ENCODE measurements at regions of chr22 and their contacts with region 1.

Region 1: GRCh38 chr22:39236321-39237317 is 8.2 kb downstream of the PDGFB start:
- DNase-seq: peak; percentile 89 to 95
- ATAC-seq: peak; percentile 57 to 67
- H3K4me3 ChIP-seq: peak overlapping the region in 2 of 4 donors; percentile 0 to 3
- H3K27ac ChIP-seq: peak overlapping the region; percentile 91 to 97 (median 92)
- H3K4me1 ChIP-seq: peaks cover 77 to 90% of the 10 kb centered on the region in 2 donors
- H3K27me3 ChIP-seq: no peaks in the 10 kb centered on the region
- CTCF ChIP-seq: no peak
- POLR2A ChIP-seq: no peak

Region 2: GRCh38 chr22:38755911-38756532 is 480.6 kb before region 1 on chr22 and contains the start of gene SUN2:
- in situ Hi-C with region 1: no loop called
- intact Hi-C with region 1: loop called (anchors 10 kb)
- DNase-seq: peak; percentile 89 to 94
- ATAC-seq: peak; percentile 76 to 81
- H3K4me3 ChIP-seq: peak within 1 kb of the TSS; percentile 55 to 93 (median 74)
- H3K27ac ChIP-seq: peak within 1 kb of the TSS; percentile 93 to 100 (median 96)
- H3K4me1 ChIP-seq: peaks cover 34 to 38% of the 10 kb centered on the region in 2 donors
- H3K27me3 ChIP-seq: no peaks in the 10 kb centered on the region
- CTCF ChIP-seq: no peak
- POLR2A ChIP-seq: peak; percentile 89 to 94
- total RNA-seq, gene SUN2: 177 to 423 (median 312) TPM

Region 3: DNA sequence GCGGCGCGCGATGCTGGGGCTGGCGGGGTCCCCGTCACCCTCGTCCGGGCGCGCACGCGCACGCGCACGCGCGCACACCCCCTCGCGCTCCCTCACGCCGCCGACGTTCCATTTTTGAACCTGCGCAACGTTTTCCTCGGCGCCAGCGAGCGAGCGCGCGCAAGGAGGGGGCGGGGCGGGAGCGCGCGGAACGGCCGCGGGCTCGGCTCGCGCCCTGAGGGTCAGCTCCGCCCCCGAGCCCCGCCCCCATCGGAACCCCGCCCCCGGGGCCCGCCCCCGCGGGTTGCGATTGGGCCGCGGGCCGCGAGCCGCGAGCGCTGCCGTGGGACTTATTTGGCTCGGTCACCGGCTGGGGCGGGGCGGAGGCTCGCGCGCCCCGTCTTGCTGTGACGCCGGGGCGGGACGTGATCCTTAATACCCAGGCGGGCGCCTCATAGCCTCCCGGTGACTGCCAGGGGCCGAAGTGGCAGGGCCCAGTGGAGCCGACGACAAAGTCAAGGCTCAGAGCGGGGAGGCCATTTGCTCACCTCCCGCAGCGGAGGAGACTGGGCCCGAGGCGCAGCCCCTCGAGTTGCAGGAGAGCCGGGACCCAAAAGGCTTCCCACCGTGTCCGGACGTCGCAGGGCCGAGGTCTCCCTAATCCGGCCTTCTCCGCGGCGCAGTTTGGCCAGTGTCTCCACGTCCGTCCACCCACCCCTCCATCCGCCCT is 84.0 kb before region 1 on chr22 and contains the start of gene CBX7:
- in situ Hi-C with region 1: no loop called
- intact Hi-C with region 1: loop called (anchors 5 kb)
- DNase-seq: peak; percentile 90 to 95
- ATAC-seq: peak; percentile 79 to 87
- H3K4me3 ChIP-seq: peak within 1 kb of the TSS; percentile 85 to 98 (median 97)
- H3K27ac ChIP-seq: peak within 1 kb of the TSS; percentile 94 to 99 (median 98)
- H3K4me1 ChIP-seq: peaks cover 29 to 31% of the 10 kb centered on the region in 2 donors
- H3K27me3 ChIP-seq: no peaks in the 10 kb centered on the region
- CTCF ChIP-seq: no peak
- POLR2A ChIP-seq: peak; percentile 87 to 96
- total RNA-seq, gene CBX7: 52.4 to 78.1 (median 62.3) TPM

Region 4: DNA sequence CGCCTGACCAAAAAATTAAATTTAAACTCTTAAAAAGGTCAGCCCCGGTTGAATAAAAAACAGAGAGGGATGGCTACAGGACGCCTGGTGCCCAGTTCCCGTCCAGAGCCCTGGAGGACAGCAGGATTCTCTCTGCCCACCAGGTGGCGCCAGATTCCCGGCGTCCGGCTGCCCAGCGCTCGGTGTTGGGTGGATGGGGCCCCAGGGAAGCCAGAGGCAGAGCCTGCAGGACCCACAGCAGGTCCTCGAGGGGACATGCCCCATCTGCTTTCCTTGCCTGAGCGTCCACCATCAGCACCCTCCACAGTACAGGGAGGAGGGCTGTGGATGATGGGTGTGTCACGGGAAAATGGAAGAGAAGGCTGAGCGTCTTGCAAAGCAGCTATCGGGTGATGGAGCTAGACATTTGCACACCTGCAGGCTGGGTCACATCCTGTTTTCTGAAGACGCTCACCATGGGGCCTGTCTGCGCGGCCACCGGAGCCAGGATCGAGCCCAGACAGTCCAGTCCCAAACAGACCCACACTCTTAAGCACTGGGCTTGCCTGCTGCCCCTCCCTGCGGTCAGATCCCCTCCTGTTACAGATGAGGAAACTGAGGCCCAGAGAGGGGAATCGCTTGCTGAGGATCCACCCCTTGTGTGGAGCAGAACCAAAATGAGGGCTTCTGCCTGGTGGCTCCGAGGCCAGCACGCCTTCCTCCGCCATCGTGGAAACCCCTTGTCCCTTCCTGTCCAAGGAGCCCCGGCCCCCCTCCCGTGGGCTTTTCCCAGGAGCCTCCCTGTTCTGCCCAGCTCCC is 65.6 kb before region 1 on chr22:
- in situ Hi-C with region 1: no loop called
- intact Hi-C with region 1: loop called (anchors 2 kb)
- DNase-seq: peak; percentile 48 to 72
- ATAC-seq: peak; percentile 81 to 87
- H3K4me3 ChIP-seq: peak overlapping the region in 1 of 4 donors; percentile 21
- H3K27ac ChIP-seq: peak overlapping the region in 3 of 4 donors; percentile 23 to 70 (median 32)
- H3K4me1 ChIP-seq: peaks cover 45 to 53% of the 10 kb centered on the region in 2 donors
- H3K27me3 ChIP-seq: no peaks in the 10 kb centered on the region
- CTCF ChIP-seq: peak; percentile 89 to 99 (median 98)
- POLR2A ChIP-seq: no peak

Region 5: DNA sequence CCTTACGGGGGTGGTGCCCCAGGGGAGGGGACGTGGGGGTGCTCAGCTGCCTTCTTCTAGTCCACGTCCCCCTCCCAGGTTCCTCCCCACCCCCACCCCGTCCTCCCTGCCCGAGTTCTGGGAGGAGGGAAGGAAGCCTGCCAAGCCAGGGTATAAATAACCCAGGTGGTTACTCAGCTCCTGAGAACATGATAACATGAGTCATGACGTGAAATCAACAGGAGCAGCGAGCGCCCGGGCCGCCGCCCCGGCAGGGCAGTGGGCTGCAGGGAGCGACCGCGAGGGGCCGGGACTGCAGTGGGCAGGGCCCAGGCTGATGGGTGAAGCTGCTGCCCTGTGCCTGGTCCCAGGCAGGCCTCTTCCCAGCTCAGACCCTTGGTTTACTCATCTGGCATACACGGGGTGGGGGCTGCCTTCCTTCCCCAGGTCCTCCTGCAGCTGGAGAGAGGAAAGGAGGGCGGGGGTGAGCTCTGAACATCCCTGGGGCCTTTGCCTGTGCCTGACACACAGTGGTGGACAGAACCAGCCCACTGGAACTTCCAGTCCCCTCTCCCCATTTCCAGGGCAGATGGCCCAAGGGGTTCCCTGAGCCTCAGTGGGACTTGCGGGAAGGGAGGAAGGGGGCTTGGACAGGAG is 16.9 kb after region 1 on chr22:
- in situ Hi-C with region 1: no loop called
- intact Hi-C with region 1: loop called (anchors 1 kb)
- DNase-seq: peak; percentile 87 to 94
- ATAC-seq: peak; percentile 81 to 83
- H3K4me3 ChIP-seq: peak overlapping the region; percentile 33 to 49 (median 42)
- H3K27ac ChIP-seq: peak overlapping the region; percentile 97 to 100 (median 99)
- H3K4me1 ChIP-seq: peaks cover 52 to 55% of the 10 kb centered on the region in 2 donors
- H3K27me3 ChIP-seq: no peaks in the 10 kb centered on the region
- CTCF ChIP-seq: no peak
- POLR2A ChIP-seq: peak; percentile 58 to 76

Region 6: DNA sequence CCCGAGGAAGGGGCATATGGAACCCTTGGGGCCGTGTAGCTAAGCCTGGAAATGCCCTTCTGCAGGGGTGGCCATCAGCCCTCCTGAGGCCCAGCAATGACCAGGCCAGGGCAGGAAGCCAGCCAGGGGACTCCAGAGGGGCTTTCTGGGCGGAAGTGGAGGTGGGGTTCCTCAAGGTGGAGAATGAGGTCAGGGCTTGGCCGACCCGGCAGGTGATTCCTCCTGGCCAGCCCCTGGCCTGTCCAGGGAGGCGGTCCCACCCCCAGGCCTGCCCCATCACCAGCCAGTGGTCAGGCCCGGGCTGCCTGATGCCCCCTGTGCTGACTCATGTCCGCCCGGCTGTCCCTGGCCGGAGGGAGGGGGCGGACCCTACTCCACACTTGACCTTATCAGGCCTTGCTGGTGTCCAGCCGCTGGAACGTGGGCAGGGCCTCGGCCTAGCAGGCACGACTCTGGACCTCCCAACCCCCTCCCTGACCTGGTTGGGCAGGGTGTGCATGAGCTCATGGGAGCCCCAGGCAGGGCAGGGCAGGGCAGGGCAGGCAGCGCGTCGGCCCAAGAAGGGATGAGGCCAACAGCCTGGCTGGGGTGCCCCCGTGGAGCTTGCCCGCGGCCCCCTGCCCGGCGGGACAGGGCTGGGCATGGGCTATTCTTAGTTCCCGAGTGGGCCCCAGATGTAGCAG is 46.8 kb after region 1 on chr22:
- in situ Hi-C with region 1: no loop called
- intact Hi-C with region 1: loop called (anchors 2 kb)
- DNase-seq: peak; percentile 80 to 94
- ATAC-seq: peak; percentile 69 to 77
- H3K4me3 ChIP-seq: no peak overlapping the region
- H3K27ac ChIP-seq: peak overlapping the region; percentile 86 to 92 (median 90)
- H3K4me1 ChIP-seq: peaks cover 19 to 22% of the 10 kb centered on the region in 2 donors
- H3K27me3 ChIP-seq: no peaks in the 10 kb centered on the region
- CTCF ChIP-seq: no peak
- POLR2A ChIP-seq: peak in 1 of 2 donors; percentile 35

Measured in gastrocnemius medialis (tissue), 4 donors.